A549 (cell line): ENCODE measurements at regions of chr1 and their contacts with region 1.

Region 1: GRCh38 chr1:235866913-235867845 is 473 bp upstream of the LYST start:
- DNase-seq: peak; percentile 83 to 94
- ATAC-seq: peak; percentile 89 to 90
- H3K4me3 ChIP-seq: peak overlapping the region; percentile 92
- H3K27ac ChIP-seq: peak overlapping the region; percentile 85 to 95
- H3K4me1 ChIP-seq: peaks cover 10% of the 10 kb centered on the region; the same call in 2 of the 3 replicates
- CTCF ChIP-seq: no peak
- EP300 ChIP-seq: no peak
- POLR2A ChIP-seq: peak; percentile 90
- RAD21 ChIP-seq: no peak; a peak in 1 of 5 replicates

Region 2: GRCh38 chr1:235799264-235799663 is 67.9 kb before region 1 on chr1:
- CTCF ChIA-PET with region 1: no interaction called
- POLR2A ChIA-PET with region 1: no interaction called
- DNase-seq: no peak
- ATAC-seq: no peak
- H3K4me3 ChIP-seq: no peak overlapping the region
- H3K27ac ChIP-seq: no peak overlapping the region
- H3K4me1 ChIP-seq: peaks cover 11% of the 10 kb centered on the region; the same call in 1 of the 3 replicates
- CTCF ChIP-seq: no peak
- EP300 ChIP-seq: no peak
- POLR2A ChIP-seq: no peak
- RAD21 ChIP-seq: no peak

Region 3: DNA sequence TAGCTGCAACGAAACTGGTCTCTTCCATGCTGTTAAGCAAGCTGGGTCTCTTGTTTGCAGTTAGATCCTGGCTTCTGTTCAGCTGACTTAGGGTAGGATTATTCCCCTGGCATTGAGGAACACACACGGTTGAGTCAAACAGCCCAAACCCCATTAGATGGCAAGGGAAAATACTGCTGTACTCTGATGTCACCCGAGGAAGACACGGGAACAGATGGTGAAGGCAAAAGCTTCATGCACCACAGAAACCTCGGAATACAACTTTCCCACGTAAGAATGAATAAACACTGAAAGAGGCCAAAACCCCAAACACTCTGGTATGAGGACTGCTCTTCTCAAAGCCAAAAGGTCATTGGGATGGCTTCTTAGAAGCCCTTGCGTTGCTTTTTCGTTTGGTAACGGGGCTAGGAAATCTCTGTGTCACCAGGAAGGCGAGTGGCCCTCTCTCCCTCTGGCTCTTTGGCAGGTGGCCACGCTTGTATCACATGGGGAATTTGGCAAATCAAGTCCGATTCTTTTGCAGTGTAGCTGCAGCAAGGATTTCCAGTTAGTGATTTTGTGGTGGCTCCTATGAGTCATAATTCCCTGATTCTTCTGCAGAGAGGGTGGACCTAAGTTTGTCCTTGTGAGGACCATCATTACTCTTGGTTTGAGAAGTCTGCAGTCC is 16.2 kb after region 1 on chr1:
- CTCF ChIA-PET with region 1: interaction called, 15 read pairs
- POLR2A ChIA-PET with region 1: no interaction called
- DNase-seq: peak in 1 of 2 experiments; percentile 17
- ATAC-seq: peak in 1 of 2 experiments; percentile 50; a peak in 3 of 6 replicates
- H3K4me3 ChIP-seq: no peak overlapping the region
- H3K27ac ChIP-seq: peak overlapping the region in 1 of 2 experiments; percentile 32; a peak in 3 of 6 replicates
- H3K4me1 ChIP-seq: peaks cover 7% of the 10 kb centered on the region; the same call in 2 of the 3 replicates
- CTCF ChIP-seq: no peak
- EP300 ChIP-seq: no peak
- POLR2A ChIP-seq: no peak
- RAD21 ChIP-seq: no peak

Region 4: DNA sequence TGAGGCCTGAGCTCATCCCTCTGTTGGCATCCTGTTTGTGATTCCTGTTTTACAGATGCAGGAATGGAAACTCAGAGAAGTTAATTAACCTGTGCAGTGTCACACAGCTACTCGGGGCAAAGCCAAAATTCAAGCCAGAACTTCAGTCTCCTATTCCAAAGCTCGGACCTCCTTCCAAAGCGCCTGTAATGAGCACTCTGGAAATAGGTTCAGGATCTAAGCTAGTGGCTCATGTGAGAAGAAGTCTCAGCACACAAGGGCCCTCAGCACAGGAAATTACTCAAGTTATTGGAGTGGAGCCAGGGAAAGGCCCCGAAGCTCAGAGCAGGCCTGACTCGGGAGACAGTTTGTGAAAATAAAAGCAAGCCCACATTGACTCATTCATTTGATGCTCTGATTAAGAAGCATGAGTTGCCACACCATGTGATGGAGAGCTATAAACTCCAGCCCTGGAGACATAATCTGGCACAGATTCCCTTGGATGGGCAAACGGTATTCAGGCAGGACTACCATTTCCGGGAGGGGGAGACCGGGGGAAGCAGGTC is 50.2 kb after region 1 on chr1:
- CTCF ChIA-PET with region 1: interaction called, 21 read pairs
- POLR2A ChIA-PET with region 1: interaction called, 21 read pairs
- DNase-seq: peak; percentile 84 to 92
- ATAC-seq: peak; percentile 83 to 90
- H3K4me3 ChIP-seq: no peak overlapping the region
- H3K27ac ChIP-seq: peak overlapping the region; percentile 78 to 87
- H3K4me1 ChIP-seq: peaks cover 58% of the 10 kb centered on the region
- CTCF ChIP-seq: no peak
- EP300 ChIP-seq: peak; percentile 81 to 82; a peak in 2 of 5 replicates
- POLR2A ChIP-seq: no peak
- RAD21 ChIP-seq: peak; percentile 28 to 46; a peak in 3 of 5 replicates

Region 5: GRCh38 chr1:235938709-235939479 is 71.7 kb after region 1 on chr1:
- CTCF ChIA-PET with region 1: interaction called, 53 read pairs
- POLR2A ChIA-PET with region 1: interaction called, 4 read pairs
- DNase-seq: no peak
- ATAC-seq: no peak
- H3K4me3 ChIP-seq: no peak overlapping the region
- H3K27ac ChIP-seq: no peak overlapping the region
- H3K4me1 ChIP-seq: no peaks in the 10 kb centered on the region
- CTCF ChIP-seq: no peak
- EP300 ChIP-seq: no peak
- POLR2A ChIP-seq: no peak
- RAD21 ChIP-seq: no peak

Region 6: DNA sequence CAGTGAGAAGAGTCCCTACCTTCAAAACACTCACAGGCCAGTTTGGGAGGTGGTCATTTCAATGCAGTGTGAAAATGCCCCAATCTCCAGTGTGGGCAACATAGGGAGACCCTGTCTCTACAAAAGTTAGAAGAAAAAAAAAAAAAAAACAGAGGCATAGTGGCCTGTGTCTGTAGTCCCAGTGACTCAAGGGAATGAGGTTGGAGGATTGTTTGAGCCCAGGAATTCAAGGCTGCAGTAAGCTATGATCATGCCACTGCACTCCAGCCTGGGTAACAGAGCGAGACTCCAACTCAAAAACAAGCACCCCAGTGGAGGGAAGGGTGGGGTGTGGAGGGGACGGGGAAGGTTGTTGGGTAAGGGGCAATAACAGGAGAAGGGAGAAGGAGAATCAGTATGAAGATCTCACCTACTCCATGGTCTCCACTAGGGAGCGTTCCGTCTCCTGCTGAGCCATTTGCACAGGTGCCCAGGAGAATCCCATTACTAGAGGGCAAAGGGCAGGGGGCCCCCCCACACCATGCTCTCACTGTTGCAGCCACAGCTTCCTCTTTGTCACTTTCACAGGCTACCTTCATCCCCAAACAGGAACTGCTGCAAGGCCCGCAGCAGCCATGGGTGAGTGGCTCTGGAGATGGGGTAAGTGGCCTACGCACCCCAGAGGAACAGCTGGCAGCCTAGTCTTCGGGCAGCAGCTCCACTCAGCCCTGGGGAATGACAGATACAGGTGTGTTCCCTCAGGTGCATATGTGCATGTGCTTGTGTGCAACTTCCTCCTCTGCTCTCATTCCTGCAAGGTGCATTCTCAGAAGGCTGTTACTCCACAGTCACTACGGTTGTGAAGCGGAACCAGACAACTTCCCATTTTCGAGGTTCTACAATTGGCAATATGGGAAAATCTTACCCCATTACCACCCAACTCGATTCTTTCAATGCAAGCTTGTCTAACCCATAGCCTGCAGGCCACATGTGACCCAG is 87.4 kb after region 1 on chr1:
- CTCF ChIA-PET with region 1: interaction called, 53 read pairs
- POLR2A ChIA-PET with region 1: no interaction called
- DNase-seq: no peak
- ATAC-seq: no peak
- H3K4me3 ChIP-seq: no peak overlapping the region
- H3K27ac ChIP-seq: no peak overlapping the region
- H3K4me1 ChIP-seq: 0 out of 3 replicates have a peak, but pooled peaks cover 8% of the 10 kb centered on the region
- CTCF ChIP-seq: no peak
- EP300 ChIP-seq: no peak
- POLR2A ChIP-seq: no peak
- RAD21 ChIP-seq: no peak